RWPE1 (cell line): ENCODE measurements at regions of chr6 and their contacts with region 1.

Region 1: DNA sequence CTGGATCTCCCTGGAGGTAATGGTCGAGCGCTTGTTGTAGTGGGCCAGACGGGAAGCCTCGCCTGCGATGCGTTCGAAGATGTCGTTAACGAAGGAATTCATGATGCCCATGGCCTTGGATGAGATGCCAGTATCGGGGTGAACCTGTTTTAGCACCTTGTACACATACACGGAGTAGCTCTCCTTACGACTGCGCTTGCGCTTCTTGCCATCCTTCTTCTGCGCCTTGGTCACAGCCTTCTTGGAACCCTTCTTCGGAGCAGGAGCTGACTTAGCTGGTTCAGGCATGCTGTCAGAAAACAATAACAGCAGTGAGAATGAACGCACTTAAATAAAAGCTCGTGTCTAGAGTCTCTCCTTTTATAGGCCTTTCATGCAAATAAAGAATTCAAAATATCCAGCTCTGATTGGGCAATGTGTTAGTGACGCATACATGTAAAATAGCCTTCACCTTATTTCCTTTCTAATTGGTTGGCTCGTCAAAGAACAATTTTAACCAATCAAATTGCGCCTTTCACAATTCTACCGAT is 129.2 kb downstream of the HFE start:
- DNase-seq: peak; percentile 94
- H3K27ac ChIP-seq: peak overlapping the region; percentile 97
- CTCF ChIP-seq: no peak

Region 2: DNA sequence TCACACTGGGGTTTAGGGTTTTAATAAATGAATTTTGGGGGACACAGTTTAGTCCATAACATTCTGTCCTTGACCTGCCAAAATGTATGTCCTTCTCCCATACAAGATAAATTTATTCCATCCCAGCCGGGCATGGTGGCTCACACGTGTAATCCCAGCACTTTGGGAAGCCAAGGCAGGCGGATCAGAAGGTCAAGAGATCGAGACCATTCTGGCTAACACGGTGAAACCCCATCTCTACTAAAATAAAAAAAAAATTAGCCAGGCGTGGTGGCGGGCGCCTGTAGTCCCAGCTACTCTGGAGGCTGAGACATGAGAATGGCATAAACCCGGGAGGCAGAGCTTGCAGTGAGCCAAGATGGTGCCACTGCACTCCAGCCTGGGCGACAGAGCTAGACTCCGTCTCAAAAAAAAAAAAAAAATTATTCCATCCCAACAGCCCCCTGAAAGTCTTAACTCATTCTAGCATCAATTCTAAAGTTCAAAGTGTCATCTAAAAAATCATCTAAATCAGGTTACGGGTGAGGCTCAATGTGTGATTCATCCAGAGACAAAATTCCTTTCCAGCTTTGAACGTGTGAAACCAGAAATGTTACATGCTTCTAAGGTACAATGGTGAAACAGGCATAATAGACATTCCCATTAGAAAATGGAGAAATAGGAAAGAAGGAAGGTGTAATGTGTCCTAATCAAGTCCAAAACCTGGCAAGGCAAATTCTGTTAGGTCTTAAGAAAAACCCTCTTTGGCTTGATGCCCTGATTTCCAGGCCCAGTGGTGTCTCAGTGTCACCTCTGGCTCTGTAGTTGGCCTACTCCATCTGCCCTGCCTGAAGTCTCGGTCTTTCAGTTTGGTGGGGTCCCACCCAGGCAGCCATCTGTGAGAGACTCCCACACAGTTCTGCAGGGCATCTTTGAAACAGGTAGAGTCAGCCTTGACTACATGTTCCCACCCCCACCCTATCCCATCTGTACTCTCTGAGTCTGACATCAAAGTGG is 85.9 kb before region 1 on chr6:
- CTCF ChIA-PET with region 1: no interaction called
- POLR2A ChIA-PET with region 1: no interaction called
- DNase-seq: no peak
- H3K27ac ChIP-seq: peak overlapping the region; percentile 20
- CTCF ChIP-seq: no peak

Region 3: GRCh38 chr6:26183581-26184366 is 32.6 kb before region 1 on chr6:
- CTCF ChIA-PET with region 1: interaction called, 3 read pairs
- POLR2A ChIA-PET with region 1: interaction called, 10 read pairs
- DNase-seq: no peak
- H3K27ac ChIP-seq: peak overlapping the region; percentile 60
- CTCF ChIP-seq: no peak

Region 4: DNA sequence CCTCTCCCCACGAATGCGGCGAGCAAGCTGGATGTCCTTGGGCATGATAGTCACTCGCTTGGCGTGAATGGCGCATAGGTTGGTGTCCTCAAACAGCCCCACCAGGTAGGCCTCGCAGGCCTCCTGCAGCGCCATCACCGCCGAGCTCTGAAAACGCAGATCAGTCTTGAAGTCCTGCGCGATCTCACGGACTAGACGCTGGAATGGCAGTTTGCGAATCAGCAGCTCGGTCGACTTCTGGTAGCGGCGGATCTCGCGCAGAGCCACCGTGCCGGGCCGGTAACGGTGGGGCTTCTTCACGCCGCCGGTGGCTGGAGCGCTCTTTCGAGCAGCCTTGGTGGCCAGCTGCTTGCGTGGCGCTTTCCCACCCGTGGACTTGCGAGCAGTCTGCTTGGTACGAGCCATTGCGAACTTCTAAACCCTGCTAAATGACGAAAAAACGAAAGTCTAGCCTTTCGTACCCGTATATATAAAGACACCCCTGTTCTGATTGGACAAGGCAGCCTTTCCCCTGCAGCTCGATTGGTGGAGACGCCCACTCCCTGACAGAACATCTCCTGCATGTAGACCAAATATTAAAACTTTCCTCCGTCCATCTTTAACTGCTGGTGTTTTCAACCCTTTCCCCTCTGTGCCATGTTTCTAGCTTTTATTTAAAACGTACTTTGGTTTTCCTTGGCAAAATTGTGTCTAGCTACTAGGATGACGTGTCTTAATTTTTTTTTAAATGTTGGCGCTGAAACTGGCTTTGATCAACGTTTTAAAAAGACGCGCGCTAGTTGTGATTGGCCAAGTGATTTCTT is 19.4 kb before region 1 on chr6:
- CTCF ChIA-PET with region 1: no interaction called
- POLR2A ChIA-PET with region 1: interaction called, 23 read pairs
- DNase-seq: peak; percentile 92
- H3K27ac ChIP-seq: peak overlapping the region; percentile 95
- CTCF ChIP-seq: no peak

Region 5: DNA sequence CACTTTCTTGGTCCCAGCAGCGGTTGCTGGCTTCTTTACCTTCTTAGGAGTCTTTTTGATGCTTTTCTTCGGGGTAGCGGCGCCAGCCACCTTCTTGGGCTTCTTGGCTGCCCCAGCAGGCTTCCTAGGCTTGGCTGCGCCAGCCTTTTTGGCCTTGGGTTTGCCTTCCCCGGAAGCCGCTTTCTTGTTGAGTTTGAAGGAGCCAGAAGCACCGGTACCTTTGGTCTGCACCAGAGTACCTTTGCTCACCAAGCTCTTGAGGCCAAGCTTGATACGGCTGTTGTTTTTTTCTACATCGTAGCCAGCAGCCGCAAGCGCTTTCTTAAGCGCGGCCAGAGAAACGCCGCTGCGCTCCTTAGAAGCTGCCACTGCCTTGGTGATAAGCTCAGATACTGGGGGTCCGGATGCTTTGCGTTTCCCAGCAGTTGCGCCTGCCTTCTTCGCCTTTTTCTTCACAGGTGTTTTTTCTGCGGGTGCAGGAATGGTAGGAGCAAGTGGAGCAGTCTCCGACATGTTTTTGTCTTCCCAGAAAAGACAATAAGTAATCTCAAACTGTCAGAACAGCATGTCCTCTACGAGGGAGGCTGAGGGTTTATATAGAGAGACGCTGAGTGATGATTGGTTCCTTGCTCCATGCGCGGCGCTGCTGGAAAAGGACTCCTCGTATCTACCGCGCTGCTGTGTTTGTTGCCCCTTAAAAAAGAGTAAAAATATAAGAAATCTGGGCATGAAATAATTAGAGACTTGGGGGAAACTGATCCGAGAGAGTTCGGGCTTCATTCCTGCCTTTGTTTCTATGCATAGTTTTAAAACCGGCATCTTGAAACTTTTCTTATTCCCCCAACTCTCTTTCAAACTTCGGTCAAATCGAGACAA is 18.2 kb after region 1 on chr6:
- CTCF ChIA-PET with region 1: interaction called, 3 read pairs
- POLR2A ChIA-PET with region 1: interaction called, 24 read pairs
- DNase-seq: peak; percentile 77
- H3K27ac ChIP-seq: peak overlapping the region; percentile 95
- CTCF ChIP-seq: no peak

Region 6: DNA sequence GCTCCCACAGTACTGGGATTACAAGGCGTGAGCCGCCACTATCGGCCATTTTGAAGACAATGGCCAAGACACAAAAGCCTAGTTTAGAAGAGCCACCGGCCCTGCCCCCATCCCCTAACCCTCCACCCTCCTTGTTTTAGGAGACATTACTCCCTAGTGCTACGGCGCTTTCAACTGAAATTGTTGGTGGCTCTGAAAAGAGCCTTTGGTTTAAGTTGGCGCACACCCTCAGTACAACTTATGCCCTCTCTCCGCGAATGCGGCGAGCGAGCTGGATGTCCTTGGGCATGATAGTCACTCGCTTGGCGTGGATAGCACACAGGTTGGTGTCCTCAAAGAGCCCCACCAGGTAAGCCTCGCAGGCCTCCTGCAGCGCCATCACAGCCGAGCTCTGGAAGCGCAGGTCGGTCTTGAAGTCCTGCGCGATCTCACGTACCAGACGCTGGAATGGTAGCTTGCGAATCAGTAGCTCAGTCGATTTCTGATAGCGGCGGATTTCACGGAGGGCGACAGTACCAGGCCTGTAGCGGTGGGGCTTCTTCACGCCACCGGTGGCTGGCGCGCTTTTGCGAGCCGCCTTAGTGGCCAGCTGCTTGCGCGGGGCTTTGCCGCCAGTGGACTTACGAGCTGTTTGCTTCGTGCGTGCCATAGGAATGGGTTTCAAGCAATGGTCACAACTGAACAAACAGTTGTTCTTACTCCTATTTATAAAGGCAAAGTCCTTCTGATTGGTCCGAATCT is 33.7 kb after region 1 on chr6:
- CTCF ChIA-PET with region 1: no interaction called
- POLR2A ChIA-PET with region 1: interaction called, 22 read pairs
- DNase-seq: no peak
- H3K27ac ChIP-seq: peak overlapping the region; percentile 98
- CTCF ChIP-seq: peak; percentile 56

Region 7: GRCh38 chr6:26270903-26271667 is 54.7 kb after region 1 on chr6:
- CTCF ChIA-PET with region 1: interaction called, 3 read pairs
- POLR2A ChIA-PET with region 1: interaction called, 39 read pairs
- DNase-seq: peak; percentile 97
- H3K27ac ChIP-seq: peak overlapping the region; percentile 98
- CTCF ChIP-seq: no peak